CD8-positive, alpha-beta memory T cell (primary cell): ENCODE measurements at regions of chr15 and their contacts with region 1.

Region 1: GRCh38 chr15:99264125-99264524 is 12.8 kb downstream of the LRRC28 start:
- DNase-seq: no peak
- H3K4me3 ChIP-seq: no peak overlapping the region
- H3K4me3 Mint-ChIP-seq: no peak overlapping the region
- H3K27ac ChIP-seq: no peak overlapping the region
- H3K27ac Mint-ChIP-seq: no peak overlapping the region
- H3K4me1 ChIP-seq: no peaks in the 10 kb centered on the region
- H3K4me1 Mint-ChIP-seq: peaks cover 0 to 6% (median 2%) of the 10 kb centered on the region in 3 donors
- H3K27me3 ChIP-seq: no peaks in the 10 kb centered on the region
- H3K27me3 Mint-ChIP-seq: no peaks in the 10 kb centered on the region

Region 2: GRCh38 chr15:99275525-99276128 is 11.5 kb after region 1 on chr15:
- CTCF ChIA-PET with region 1: interaction called, 14 read pairs
- POLR2A ChIA-PET with region 1: no interaction called
- DNase-seq: no peak
- H3K4me3 ChIP-seq: no peak overlapping the region
- H3K4me3 Mint-ChIP-seq: no peak overlapping the region
- H3K27ac ChIP-seq: no peak overlapping the region
- H3K27ac Mint-ChIP-seq: no peak overlapping the region
- H3K4me1 ChIP-seq: no peaks in the 10 kb centered on the region
- H3K4me1 Mint-ChIP-seq: peaks cover 12 to 19% (median 18%) of the 10 kb centered on the region in 3 donors
- H3K27me3 ChIP-seq: no peaks in the 10 kb centered on the region
- H3K27me3 Mint-ChIP-seq: no peaks in the 10 kb centered on the region